ENCODE measurements at regions of chr20 and their contacts with region 1.

Region 1: DNA sequence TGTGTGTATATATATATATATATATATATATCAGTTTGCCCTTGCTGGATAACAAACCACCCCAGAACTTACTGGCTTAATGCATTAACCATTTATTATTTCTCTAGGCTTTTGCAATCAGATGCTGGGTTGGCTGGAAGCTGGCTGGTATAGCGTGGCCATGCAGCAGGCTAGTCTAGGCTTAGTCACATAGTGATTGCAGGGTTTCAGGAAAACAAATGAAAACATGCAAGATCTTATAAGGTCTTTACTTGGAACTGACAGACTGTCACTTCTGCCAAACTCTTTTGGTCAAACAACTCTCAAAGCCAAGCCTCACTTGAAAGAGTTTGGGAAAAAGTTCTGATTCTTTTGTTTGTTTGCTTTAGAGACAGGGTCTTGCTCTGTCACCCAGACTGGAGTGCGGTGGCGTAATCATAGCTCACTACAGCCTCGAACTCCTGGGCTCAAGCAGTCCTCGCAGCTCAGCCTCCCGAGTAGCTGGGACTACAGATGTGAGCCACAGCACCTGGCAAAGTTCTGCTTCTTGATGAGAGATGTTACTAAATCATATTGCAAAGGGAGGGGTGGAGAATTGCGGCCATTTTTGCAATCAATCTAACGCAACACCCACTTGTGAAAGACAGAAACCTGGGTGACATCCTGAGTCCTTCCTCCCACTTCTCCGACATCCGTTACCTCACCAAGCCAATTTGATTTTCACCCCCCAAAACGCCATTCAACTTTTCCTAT is 74.6 kb upstream of the RNF24 start:
- DNase-seq: no peak
- ATAC-seq: no peak
- H3K4me3 Mint-ChIP-seq: no peak overlapping the region
- H3K27ac Mint-ChIP-seq: no peak overlapping the region
- H3K4me1 Mint-ChIP-seq: peaks cover 7% of the 10 kb centered on the region
- H3K27me3 Mint-ChIP-seq: peaks cover 5% of the 10 kb centered on the region
- CTCF ChIP-seq: no peak

Region 2: GRCh38 chr20:4014031-4014474 is 75.9 kb before region 1 on chr20:
- CTCF ChIA-PET with region 1: interaction called, 33 read pairs
- POLR2A ChIA-PET with region 1: interaction called, 4 read pairs
- intact Hi-C with region 1: loop called (anchors 5 kb)
- DNase-seq: peak; percentile 24
- ATAC-seq: no peak
- H3K4me3 Mint-ChIP-seq: peak overlapping the region; percentile 90
- H3K27ac Mint-ChIP-seq: no peak overlapping the region
- H3K4me1 Mint-ChIP-seq: peaks cover 40% of the 10 kb centered on the region
- H3K27me3 Mint-ChIP-seq: no peaks in the 10 kb centered on the region
- CTCF ChIP-seq: peak; percentile 17

Region 3: GRCh38 chr20:4021906-4022305 is 68.0 kb before region 1 on chr20:
- CTCF ChIA-PET with region 1: interaction called, 10 read pairs
- POLR2A ChIA-PET with region 1: no interaction called
- intact Hi-C with region 1: no loop called
- DNase-seq: no peak
- ATAC-seq: no peak
- H3K4me3 Mint-ChIP-seq: no peak overlapping the region
- H3K27ac Mint-ChIP-seq: no peak overlapping the region
- H3K4me1 Mint-ChIP-seq: peaks cover 7% of the 10 kb centered on the region
- H3K27me3 Mint-ChIP-seq: no peaks in the 10 kb centered on the region
- CTCF ChIP-seq: no peak

Region 4: DNA sequence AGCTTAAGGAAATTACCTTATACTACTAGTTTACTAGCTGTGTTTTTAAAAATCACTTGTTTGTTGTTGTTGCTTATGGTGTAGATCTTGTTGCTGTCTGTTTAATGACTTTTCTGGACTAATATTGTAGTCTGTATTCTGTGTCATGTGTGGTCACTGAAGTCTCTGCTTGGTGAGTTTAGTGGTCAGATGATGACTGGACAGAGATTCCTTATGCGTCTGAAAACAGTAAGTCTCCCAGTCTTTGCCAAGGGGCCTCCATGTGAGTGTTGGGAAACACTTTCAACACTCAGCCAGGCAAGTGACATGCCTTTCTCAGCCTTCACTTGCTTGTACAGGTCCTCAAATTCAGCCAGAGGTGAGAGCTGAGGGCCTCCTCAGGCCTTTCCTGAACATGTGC is 182.3 kb after region 1 on chr20:
- CTCF ChIA-PET with region 1: no interaction called
- POLR2A ChIA-PET with region 1: no interaction called
- intact Hi-C with region 1: no loop called
- DNase-seq: no peak
- ATAC-seq: no peak
- H3K4me3 Mint-ChIP-seq: no peak overlapping the region
- H3K27ac Mint-ChIP-seq: no peak overlapping the region
- H3K4me1 Mint-ChIP-seq: no peaks in the 10 kb centered on the region
- H3K27me3 Mint-ChIP-seq: peaks cover 5% of the 10 kb centered on the region
- CTCF ChIP-seq: no peak

Measured in activated CD8-positive, alpha-beta T cell treated with anti-CD3 and anti-CD28 coated beads for 36 hours (primary cell).